ENCODE measurements at regions of chr1 and their contacts with region 1.

Region 1: DNA sequence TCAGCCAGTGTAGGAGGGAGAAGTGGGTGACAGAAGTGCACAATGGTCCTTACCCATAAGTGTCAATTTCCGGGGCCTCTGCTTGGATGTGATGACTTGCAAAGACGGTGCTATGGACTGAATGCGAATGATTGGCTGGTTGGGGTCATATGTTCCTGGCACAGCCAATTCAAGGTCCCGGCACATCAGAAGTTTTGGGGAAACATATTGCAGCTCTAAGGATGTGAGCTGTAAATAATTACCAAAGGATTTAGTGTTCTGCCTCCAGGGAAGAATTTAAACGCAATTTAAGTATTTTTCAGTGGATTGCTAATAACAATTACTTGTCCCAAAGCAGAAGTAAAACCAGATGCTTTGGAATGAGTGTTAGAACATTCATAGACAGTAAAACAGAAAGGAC is 26.9 kb upstream of the EXOSC10 start:
- DNase-seq: no peak

Region 2: GRCh38 chr1:11151826-11152612 is 25.4 kb after region 1 on chr1:
- intact Hi-C with region 1: loop called in 1 of 2 experiments (anchors 2 kb)
- DNase-seq: no peak

Region 3: GRCh38 chr1:11483555-11484322 is 357.2 kb after region 1 on chr1:
- intact Hi-C with region 1: loop called in 1 of 2 experiments (anchors 2 kb)
- DNase-seq: peak; percentile 66

Measured in posterior vena cava (tissue), 2 donors.